ENCODE measurements at regions of chr19 and their contacts with region 1.

Region 1: GRCh38 chr19:34345947-34346351 is 19.0 kb upstream of the GPI start:
- DNase-seq: peak; percentile 82
- H3K4me3 Mint-ChIP-seq: no peak overlapping the region
- H3K27ac Mint-ChIP-seq: no peak overlapping the region
- H3K4me1 Mint-ChIP-seq: peaks cover 7% of the 10 kb centered on the region
- H3K27me3 Mint-ChIP-seq: no peaks in the 10 kb centered on the region
- CTCF ChIP-seq: peak; percentile 86

Region 2: GRCh38 chr19:34359140-34359953 is 13.4 kb after region 1 on chr19:
- CTCF ChIA-PET with region 1: interaction called, 37 read pairs
- POLR2A ChIA-PET with region 1: interaction called, 7 read pairs
- intact Hi-C with region 1: no loop called
- DNase-seq: peak; percentile 97
- H3K4me3 Mint-ChIP-seq: peak overlapping the region; percentile 80
- H3K27ac Mint-ChIP-seq: peak overlapping the region; percentile 94
- H3K4me1 Mint-ChIP-seq: peaks cover 9% of the 10 kb centered on the region
- H3K27me3 Mint-ChIP-seq: no peaks in the 10 kb centered on the region
- CTCF ChIP-seq: peak; percentile 40

Region 3: DNA sequence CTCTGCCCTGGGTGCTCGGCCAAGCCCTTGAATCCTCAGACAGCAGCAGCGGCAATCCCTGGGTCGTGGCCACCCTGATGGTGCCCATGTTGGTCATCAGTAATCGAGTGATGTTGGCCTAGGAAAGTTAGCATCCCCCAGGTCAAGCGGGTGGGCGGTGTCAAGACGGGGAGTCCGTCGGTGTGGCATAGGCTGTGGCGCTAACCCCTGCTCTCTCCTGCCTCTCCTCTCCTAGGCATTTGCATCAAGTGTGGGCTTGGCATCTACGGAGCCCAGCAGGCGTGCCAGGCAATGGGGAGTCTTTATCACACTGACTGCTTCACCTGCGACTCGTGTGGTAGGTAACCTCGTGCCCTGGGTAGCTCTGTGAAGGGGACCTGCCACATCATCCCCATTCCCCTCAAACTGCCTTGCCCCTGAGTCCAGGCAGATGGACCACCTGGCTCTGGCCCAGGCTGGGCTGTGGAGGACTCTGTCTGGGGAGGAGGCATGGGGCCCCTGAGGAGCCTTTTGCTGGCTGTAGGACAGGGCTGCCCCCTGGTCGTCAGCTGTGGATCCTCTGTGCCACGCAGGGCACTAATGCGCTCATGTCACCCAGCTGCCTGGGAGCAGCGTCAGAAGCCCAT is 144.3 kb after region 1 on chr19:
- CTCF ChIA-PET with region 1: no interaction called
- POLR2A ChIA-PET with region 1: no interaction called
- intact Hi-C with region 1: no loop called
- DNase-seq: no peak
- H3K4me3 Mint-ChIP-seq: no peak overlapping the region
- H3K27ac Mint-ChIP-seq: no peak overlapping the region
- H3K4me1 Mint-ChIP-seq: peaks cover 12% of the 10 kb centered on the region
- H3K27me3 Mint-ChIP-seq: no peaks in the 10 kb centered on the region
- CTCF ChIP-seq: no peak

Measured in MCF 10A (cell line).